Activated CD8-positive, alpha-beta T cell treated with anti-CD3 and anti-CD28 coated beads for 36 hours (primary cell): ENCODE measurements at regions of chr17 and their contacts with region 1.

Region 1: DNA sequence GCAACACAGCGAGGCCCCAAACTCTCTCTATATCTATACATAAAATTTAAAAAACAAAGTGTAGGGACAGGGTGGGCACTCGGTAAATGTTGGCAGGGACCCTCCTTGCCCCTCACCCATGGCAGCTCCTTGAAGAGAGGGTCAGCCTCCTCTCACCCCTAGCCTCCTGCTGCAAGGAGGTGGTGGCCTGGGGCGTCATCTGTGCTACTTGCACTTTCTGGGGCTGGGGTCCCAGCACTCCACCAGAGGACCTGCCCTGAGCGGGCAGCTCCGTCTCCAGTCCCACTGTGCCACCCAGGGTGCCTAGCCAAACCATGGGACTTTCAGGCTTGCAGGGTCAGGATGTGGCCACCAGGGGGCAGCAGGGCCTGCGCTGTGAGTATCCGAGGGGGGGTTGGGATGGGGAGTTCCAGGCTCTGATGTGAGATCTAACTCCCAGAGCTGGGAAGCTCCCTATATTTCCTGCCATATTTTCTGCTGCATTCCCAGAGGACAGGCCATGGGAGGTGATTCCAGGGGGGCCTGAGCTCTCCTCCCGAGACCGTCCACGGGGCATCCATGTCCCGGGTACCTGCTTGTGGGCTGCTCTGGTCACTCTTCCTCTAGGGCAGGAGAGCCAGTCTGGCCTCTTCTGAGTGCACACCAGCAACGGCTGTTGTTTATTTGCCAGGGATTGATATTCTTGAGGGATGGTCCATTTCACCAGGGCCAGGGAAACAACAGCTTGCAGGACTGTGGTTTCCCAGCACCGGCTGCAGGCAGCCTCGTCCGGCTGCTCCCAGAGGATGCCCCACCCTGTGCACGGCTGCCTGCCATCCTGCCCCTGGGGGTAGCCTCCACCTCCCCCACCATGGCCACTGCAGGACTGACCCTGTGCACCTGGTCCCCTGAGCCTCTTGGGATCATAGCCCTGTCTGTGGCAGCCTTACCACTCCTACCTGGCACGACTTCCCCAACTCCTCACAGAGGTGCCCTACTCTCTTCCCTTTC is 1.1 kb downstream of the GPR142 start:
- DNase-seq: peak; percentile 82
- ATAC-seq: peak; percentile 78
- H3K4me3 Mint-ChIP-seq: peak overlapping the region; percentile 7
- H3K27ac Mint-ChIP-seq: no peak overlapping the region
- H3K4me1 Mint-ChIP-seq: peaks cover 15% of the 10 kb centered on the region
- H3K27me3 Mint-ChIP-seq: no peaks in the 10 kb centered on the region
- CTCF ChIP-seq: peak; percentile 97

Region 2: DNA sequence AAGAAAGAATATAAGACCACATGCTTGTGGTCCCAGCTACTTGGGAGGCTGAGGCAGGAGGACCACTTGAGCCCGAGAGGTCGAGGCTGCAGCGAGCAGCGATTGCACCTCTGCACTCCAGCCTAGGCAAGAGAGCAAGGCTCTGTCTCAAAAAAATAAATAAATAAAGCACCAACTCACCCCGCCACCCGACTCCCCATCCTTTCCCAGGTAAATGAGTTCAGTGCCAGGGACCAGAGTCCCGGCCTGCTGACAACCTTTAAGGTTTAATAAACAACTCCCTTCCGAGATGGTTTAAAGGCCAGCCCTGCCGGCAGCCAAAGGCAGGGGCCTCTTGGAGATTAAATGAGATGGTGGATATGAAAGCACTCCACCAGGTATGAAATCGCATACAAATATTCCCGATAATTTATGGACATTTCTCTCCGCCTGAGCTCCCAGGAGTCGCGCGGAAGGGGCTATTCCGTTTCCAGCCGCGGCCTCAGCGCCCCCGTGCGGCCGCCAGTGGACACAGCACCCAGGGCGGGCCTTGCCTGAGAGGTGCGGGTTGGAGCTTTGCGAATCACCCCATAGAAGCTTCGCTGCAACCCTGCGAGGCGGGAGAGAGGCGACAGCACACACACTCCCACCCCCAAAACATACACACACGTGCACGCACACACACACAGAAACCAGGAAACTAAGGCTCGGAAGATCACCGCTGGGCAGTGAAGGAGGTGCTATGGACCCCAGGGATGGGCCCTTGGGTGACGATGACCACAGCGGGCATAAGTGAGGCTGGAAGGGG is 168.9 kb before region 1 on chr17:
- CTCF ChIA-PET with region 1: no interaction called
- POLR2A ChIA-PET with region 1: no interaction called
- intact Hi-C with region 1: no loop called
- DNase-seq: peak; percentile 75
- ATAC-seq: peak; percentile 66
- H3K4me3 Mint-ChIP-seq: no peak overlapping the region
- H3K27ac Mint-ChIP-seq: no peak overlapping the region
- H3K4me1 Mint-ChIP-seq: peaks cover 8% of the 10 kb centered on the region
- H3K27me3 Mint-ChIP-seq: peaks cover 25% of the 10 kb centered on the region
- CTCF ChIP-seq: peak; percentile 99

Region 3: DNA sequence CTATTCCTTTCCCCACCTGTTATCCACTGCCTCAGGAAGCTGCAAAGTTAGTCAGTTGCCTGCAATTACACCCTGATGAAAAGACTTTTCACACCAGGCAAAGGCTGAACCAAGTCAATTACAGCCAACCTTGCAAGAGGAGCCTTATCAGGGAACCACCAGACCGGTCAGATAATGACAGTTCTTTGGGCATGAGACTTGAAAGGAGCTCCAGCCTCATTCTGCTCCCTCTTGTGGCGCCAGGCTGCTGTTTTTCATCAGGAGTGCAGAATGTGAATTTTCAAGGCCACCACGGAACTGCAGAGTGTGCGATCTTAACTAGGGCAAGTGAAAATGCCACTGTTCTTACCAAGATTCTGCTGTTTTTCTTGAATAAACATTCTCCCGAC is 71.8 kb before region 1 on chr17:
- CTCF ChIA-PET with region 1: interaction called, 55 read pairs
- POLR2A ChIA-PET with region 1: no interaction called
- intact Hi-C with region 1: no loop called
- DNase-seq: peak; percentile 50
- ATAC-seq: no peak
- H3K4me3 Mint-ChIP-seq: no peak overlapping the region
- H3K27ac Mint-ChIP-seq: no peak overlapping the region
- H3K4me1 Mint-ChIP-seq: peaks cover 10% of the 10 kb centered on the region
- H3K27me3 Mint-ChIP-seq: peaks cover 5% of the 10 kb centered on the region
- CTCF ChIP-seq: no peak

Region 4: GRCh38 chr17:74354123-74354522 is 14.3 kb before region 1 on chr17:
- CTCF ChIA-PET with region 1: interaction called, 58 read pairs
- POLR2A ChIA-PET with region 1: interaction called, 3 read pairs
- intact Hi-C with region 1: no loop called
- DNase-seq: peak; percentile 83
- ATAC-seq: peak; percentile 91
- H3K4me3 Mint-ChIP-seq: no peak overlapping the region
- H3K27ac Mint-ChIP-seq: no peak overlapping the region
- H3K4me1 Mint-ChIP-seq: peaks cover 6% of the 10 kb centered on the region
- H3K27me3 Mint-ChIP-seq: peaks cover 55% of the 10 kb centered on the region
- CTCF ChIP-seq: peak; percentile 94

Region 5: GRCh38 chr17:74394977-74395376 is 26.6 kb after region 1 on chr17:
- CTCF ChIA-PET with region 1: interaction called, 35 read pairs
- POLR2A ChIA-PET with region 1: no interaction called
- intact Hi-C with region 1: no loop called
- DNase-seq: no peak
- ATAC-seq: no peak
- H3K4me3 Mint-ChIP-seq: no peak overlapping the region
- H3K27ac Mint-ChIP-seq: no peak overlapping the region
- H3K4me1 Mint-ChIP-seq: no peaks in the 10 kb centered on the region
- H3K27me3 Mint-ChIP-seq: peaks cover 1% of the 10 kb centered on the region
- CTCF ChIP-seq: no peak

Region 6: DNA sequence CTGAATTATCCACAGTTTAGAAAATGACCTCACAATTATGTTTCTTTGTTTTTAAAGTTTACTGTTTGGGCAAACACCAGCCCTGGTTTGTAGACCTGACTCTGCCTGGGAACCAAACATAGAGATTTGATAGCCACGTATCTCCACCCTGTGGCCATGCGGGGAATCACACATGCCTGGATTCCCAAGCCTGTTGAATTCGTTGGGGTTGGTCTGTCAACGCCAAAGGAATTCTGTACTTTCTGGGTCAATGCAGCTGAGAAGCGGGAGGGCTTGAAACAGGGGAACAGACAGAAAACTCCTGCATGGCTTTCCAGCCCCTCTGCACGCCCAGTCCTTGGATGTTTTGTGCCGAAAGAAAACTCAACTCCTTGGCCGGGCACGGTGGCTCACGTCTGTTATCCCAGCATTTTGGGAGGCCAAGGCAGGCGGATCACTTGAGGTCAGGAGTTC is 125.0 kb after region 1 on chr17:
- CTCF ChIA-PET with region 1: interaction called, 14 read pairs
- POLR2A ChIA-PET with region 1: interaction called, 4 read pairs
- intact Hi-C with region 1: no loop called
- DNase-seq: peak; percentile 76
- ATAC-seq: peak; percentile 96
- H3K4me3 Mint-ChIP-seq: no peak overlapping the region
- H3K27ac Mint-ChIP-seq: no peak overlapping the region
- H3K4me1 Mint-ChIP-seq: peaks cover 3% of the 10 kb centered on the region
- H3K27me3 Mint-ChIP-seq: no peaks in the 10 kb centered on the region
- CTCF ChIP-seq: peak; percentile 96